Activated CD4-positive, alpha-beta T cell treated with anti-CD3 and anti-CD28 coated beads for 36 hours (primary cell): ENCODE measurements at regions of chr14 and their contacts with region 1.

Region 1: DNA sequence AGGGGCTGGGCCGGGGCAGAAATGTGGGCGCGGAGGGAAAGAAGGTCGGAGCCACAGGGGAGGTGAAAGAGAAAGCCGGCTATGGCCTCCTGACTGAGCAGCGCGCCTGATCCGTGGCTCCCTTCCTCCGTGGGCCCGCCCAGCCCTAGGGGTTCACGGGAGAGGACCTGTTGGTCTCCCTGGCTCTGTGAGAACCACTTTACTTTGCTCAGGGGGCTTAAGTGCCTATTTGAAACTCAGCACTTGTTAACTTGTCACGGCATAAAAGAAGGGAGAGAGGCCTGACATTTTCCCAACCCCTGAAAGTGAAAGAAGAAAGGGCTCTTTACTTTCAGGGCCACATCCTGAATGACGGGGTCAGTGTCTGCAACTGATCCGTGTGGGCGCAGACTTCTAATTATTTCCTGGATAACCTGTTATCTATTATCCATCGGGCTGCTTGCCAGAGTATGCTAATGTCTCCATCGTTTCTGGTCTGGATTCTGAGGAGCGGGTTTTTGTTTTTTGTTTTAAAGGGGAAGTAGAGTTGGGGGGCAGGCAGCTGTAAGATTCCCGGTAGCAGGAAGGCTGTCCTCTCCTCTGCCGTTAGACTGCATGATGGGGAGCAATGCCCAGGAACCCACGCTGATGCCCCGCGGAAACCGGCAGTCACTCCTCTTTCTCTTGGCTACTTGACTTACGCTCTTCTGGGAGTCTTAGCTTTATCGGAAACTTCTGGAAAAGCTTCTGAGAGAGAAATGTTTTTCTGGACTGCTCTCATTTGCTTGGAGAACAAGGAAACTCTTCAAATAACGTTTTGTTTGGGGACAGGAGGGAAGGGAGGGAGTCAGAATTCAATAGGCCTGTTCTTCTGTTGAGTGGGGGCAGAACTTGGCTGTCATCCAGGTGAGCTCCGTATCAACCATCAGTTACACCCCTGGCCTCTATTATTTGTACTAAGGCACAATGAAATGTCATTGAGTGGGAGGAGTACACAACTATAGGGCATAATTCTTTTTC is 127.7 kb upstream of the MAX start:
- DNase-seq: peak; percentile 65
- ATAC-seq: peak; percentile 84
- H3K4me3 Mint-ChIP-seq: peak overlapping the region; percentile 71
- H3K27ac Mint-ChIP-seq: peak overlapping the region; percentile 92
- H3K4me1 Mint-ChIP-seq: peaks cover 41% of the 10 kb centered on the region
- H3K27me3 Mint-ChIP-seq: no peaks in the 10 kb centered on the region

Region 2: GRCh38 chr14:65117769-65118701 is 112.0 kb before region 1 on chr14:
- CTCF ChIA-PET with region 1: no interaction called
- POLR2A ChIA-PET with region 1: no interaction called
- intact Hi-C with region 1: no loop called
- DNase-seq: no peak
- ATAC-seq: no peak
- H3K4me3 Mint-ChIP-seq: no peak overlapping the region
- H3K27ac Mint-ChIP-seq: no peak overlapping the region
- H3K4me1 Mint-ChIP-seq: no peaks in the 10 kb centered on the region
- H3K27me3 Mint-ChIP-seq: peaks cover 5% of the 10 kb centered on the region

Region 3: DNA sequence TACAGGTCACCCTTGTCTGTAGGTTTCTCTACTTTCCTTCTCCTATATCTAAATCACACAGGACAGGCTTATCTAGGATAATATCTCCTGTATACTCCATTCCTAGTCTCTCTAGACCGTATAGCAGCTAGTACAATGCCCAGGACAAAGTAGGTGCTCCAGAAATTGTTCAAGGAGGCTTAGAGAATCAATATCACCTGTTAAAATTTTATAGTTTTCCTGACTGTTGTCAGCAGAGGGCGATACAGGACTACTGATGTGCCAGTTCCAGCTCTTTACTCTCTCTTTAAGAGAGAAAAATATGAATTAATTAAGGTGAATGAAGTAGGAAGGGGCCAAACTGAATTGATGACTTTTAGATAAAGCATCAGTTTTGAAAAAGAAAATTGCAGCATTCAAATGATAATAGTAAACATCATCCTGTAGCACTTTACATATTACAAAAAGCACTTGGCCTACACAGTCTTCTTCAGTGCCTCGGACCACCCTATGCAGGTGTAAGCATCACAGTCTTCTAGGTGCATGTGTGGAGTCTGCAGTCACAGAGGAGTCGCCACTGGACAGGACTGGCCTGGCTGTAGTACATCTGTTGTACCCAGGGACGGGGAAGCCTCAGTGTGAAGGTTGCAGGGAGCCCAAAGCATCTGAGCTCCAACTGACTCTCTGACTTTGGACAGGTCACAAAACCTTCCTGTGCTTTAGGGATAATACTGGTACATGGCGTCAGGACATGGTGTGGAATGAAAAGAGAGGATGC is 65.8 kb before region 1 on chr14:
- CTCF ChIA-PET with region 1: interaction called, 3 read pairs
- POLR2A ChIA-PET with region 1: interaction called, 10 read pairs
- intact Hi-C with region 1: no loop called
- DNase-seq: peak; percentile 56
- ATAC-seq: peak; percentile 60
- H3K4me3 Mint-ChIP-seq: no peak overlapping the region
- H3K27ac Mint-ChIP-seq: no peak overlapping the region
- H3K4me1 Mint-ChIP-seq: peaks cover 14% of the 10 kb centered on the region
- H3K27me3 Mint-ChIP-seq: no peaks in the 10 kb centered on the region

Region 4: GRCh38 chr14:65676361-65676998 is 446.4 kb after region 1 on chr14:
- CTCF ChIA-PET with region 1: no interaction called
- POLR2A ChIA-PET with region 1: no interaction called
- intact Hi-C with region 1: no loop called
- DNase-seq: no peak
- ATAC-seq: no peak
- H3K4me3 Mint-ChIP-seq: no peak overlapping the region
- H3K27ac Mint-ChIP-seq: no peak overlapping the region
- H3K4me1 Mint-ChIP-seq: no peaks in the 10 kb centered on the region
- H3K27me3 Mint-ChIP-seq: no peaks in the 10 kb centered on the region